MCF 10A (cell line): ENCODE measurements at regions of chr14 and their contacts with region 1.

Region 1: GRCh38 chr14:75906676-75907280 is 75.0 kb downstream of the TGFB3 start:
- DNase-seq: peak; percentile 69
- H3K4me3 Mint-ChIP-seq: no peak overlapping the region
- H3K27ac Mint-ChIP-seq: no peak overlapping the region
- H3K4me1 Mint-ChIP-seq: peaks cover 11% of the 10 kb centered on the region
- H3K27me3 Mint-ChIP-seq: no peaks in the 10 kb centered on the region
- CTCF ChIP-seq: peak; percentile 70

Region 2: GRCh38 chr14:75726321-75726720 is 180.5 kb before region 1 on chr14:
- CTCF ChIA-PET with region 1: no interaction called
- POLR2A ChIA-PET with region 1: no interaction called
- intact Hi-C with region 1: no loop called
- DNase-seq: no peak
- H3K4me3 Mint-ChIP-seq: no peak overlapping the region
- H3K27ac Mint-ChIP-seq: no peak overlapping the region
- H3K4me1 Mint-ChIP-seq: no peaks in the 10 kb centered on the region
- H3K27me3 Mint-ChIP-seq: no peaks in the 10 kb centered on the region
- CTCF ChIP-seq: no peak

Region 3: GRCh38 chr14:75736845-75737481 is 169.8 kb before region 1 on chr14:
- CTCF ChIA-PET with region 1: no interaction called
- POLR2A ChIA-PET with region 1: no interaction called
- intact Hi-C with region 1: no loop called
- DNase-seq: no peak
- H3K4me3 Mint-ChIP-seq: no peak overlapping the region
- H3K27ac Mint-ChIP-seq: no peak overlapping the region
- H3K4me1 Mint-ChIP-seq: peaks cover 7% of the 10 kb centered on the region
- H3K27me3 Mint-ChIP-seq: no peaks in the 10 kb centered on the region
- CTCF ChIP-seq: no peak

Region 4: DNA sequence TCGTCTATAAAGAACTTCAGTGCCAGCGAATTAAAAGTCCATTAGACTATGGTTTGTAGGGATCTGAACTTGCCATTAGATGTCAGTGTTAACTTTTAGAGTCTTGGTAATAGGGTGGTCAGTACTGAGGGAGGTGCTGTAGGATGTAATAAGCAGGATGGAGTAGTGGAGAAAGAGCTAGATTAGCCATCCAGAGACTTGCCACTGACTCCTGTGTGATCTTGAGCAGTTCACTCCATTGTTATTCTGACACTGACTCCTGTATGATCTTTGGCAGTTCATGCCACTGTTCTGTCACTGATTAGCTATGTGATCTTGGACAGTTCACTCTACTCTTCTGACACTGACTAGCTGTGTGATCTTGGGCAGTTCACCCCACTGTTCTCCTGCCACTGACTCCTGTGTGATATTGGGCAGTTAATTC is 112.2 kb before region 1 on chr14:
- CTCF ChIA-PET with region 1: interaction called, 6 read pairs
- POLR2A ChIA-PET with region 1: interaction called, 3 read pairs
- intact Hi-C with region 1: loop called (anchors 10 kb)
- DNase-seq: peak; percentile 26
- H3K4me3 Mint-ChIP-seq: no peak overlapping the region
- H3K27ac Mint-ChIP-seq: no peak overlapping the region
- H3K4me1 Mint-ChIP-seq: no peaks in the 10 kb centered on the region
- H3K27me3 Mint-ChIP-seq: no peaks in the 10 kb centered on the region
- CTCF ChIP-seq: peak; percentile 24

Region 5: GRCh38 chr14:75886636-75887348 is 20.0 kb before region 1 on chr14:
- CTCF ChIA-PET with region 1: interaction called, 14 read pairs
- POLR2A ChIA-PET with region 1: interaction called, 3 read pairs
- intact Hi-C with region 1: no loop called
- DNase-seq: peak; percentile 48
- H3K4me3 Mint-ChIP-seq: peak overlapping the region; percentile 28
- H3K27ac Mint-ChIP-seq: peak overlapping the region; percentile 68
- H3K4me1 Mint-ChIP-seq: peaks cover 15% of the 10 kb centered on the region
- H3K27me3 Mint-ChIP-seq: no peaks in the 10 kb centered on the region
- CTCF ChIP-seq: no peak

Region 6: GRCh38 chr14:75896341-75896740 is 10.4 kb before region 1 on chr14:
- CTCF ChIA-PET with region 1: interaction called, 17 read pairs
- POLR2A ChIA-PET with region 1: interaction called, 4 read pairs
- intact Hi-C with region 1: no loop called
- DNase-seq: no peak
- H3K4me3 Mint-ChIP-seq: no peak overlapping the region
- H3K27ac Mint-ChIP-seq: no peak overlapping the region
- H3K4me1 Mint-ChIP-seq: peaks cover 6% of the 10 kb centered on the region
- H3K27me3 Mint-ChIP-seq: no peaks in the 10 kb centered on the region
- CTCF ChIP-seq: no peak

Region 7: GRCh38 chr14:75917322-75917945 is 10.7 kb after region 1 on chr14:
- CTCF ChIA-PET with region 1: interaction called, 18 read pairs
- POLR2A ChIA-PET with region 1: interaction called, 5 read pairs
- intact Hi-C with region 1: no loop called
- DNase-seq: no peak
- H3K4me3 Mint-ChIP-seq: no peak overlapping the region
- H3K27ac Mint-ChIP-seq: no peak overlapping the region
- H3K4me1 Mint-ChIP-seq: no peaks in the 10 kb centered on the region
- H3K27me3 Mint-ChIP-seq: no peaks in the 10 kb centered on the region
- CTCF ChIP-seq: no peak

Region 8: GRCh38 chr14:75982266-75983018 is 75.7 kb after region 1 on chr14:
- CTCF ChIA-PET with region 1: interaction called, 154 read pairs
- POLR2A ChIA-PET with region 1: interaction called, 30 read pairs
- intact Hi-C with region 1: loop called (anchors 1 kb)
- DNase-seq: peak; percentile 81
- H3K4me3 Mint-ChIP-seq: peak overlapping the region; percentile 73
- H3K27ac Mint-ChIP-seq: peak overlapping the region; percentile 78
- H3K4me1 Mint-ChIP-seq: peaks cover 34% of the 10 kb centered on the region
- H3K27me3 Mint-ChIP-seq: no peaks in the 10 kb centered on the region
- CTCF ChIP-seq: peak; percentile 72